ENCODE measurements at regions of chr2 and their contacts with region 1.

Region 1: DNA sequence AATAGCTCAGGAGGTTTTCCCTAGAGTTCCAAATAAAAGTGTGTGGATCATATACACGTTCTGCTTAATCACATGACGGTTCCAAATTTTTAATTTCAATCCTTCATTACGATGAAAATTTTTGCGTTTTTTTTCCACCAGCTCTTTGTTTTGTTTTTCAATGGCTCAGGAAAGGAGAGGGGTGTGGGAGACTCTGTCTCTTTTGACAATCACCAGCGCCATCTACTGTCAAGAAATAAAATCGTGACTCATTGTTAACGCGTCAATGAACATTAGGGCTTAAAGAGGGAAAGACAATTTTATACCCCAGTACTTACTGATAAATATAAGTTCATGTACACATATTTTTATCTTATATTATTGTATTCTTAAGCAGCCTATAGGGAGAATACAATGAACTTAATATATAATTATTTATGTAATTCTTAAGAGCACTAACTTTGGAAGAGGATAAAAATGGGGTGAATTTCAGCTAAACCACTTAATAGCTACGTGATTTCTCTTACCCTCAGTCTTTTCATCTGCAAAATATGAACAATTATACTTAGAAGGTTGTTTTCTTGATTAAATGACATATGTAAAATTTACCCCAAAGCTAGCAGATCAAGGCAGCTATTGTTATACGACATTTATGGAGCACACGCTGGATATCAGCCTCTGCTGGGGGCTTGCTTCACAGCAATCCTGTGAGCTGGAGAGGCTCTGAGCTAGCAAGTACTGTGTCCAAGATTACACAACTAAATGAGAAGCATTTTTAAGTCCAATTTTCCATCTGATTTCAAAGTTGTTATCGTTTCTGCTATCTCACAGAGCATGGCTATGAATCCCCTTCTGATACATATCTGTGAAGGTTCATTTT is 47.4 kb upstream of the RMDN2 start:
- DNase-seq: no peak
- ATAC-seq: peak; percentile 34
- H3K4me3 Mint-ChIP-seq: no peak overlapping the region
- H3K27ac Mint-ChIP-seq: no peak overlapping the region
- H3K4me1 Mint-ChIP-seq: peaks cover 34% of the 10 kb centered on the region
- H3K27me3 Mint-ChIP-seq: peaks cover 8% of the 10 kb centered on the region; the same call in 1 of the 2 replicates
- CTCF ChIP-seq: peak; percentile 64

Region 2: DNA sequence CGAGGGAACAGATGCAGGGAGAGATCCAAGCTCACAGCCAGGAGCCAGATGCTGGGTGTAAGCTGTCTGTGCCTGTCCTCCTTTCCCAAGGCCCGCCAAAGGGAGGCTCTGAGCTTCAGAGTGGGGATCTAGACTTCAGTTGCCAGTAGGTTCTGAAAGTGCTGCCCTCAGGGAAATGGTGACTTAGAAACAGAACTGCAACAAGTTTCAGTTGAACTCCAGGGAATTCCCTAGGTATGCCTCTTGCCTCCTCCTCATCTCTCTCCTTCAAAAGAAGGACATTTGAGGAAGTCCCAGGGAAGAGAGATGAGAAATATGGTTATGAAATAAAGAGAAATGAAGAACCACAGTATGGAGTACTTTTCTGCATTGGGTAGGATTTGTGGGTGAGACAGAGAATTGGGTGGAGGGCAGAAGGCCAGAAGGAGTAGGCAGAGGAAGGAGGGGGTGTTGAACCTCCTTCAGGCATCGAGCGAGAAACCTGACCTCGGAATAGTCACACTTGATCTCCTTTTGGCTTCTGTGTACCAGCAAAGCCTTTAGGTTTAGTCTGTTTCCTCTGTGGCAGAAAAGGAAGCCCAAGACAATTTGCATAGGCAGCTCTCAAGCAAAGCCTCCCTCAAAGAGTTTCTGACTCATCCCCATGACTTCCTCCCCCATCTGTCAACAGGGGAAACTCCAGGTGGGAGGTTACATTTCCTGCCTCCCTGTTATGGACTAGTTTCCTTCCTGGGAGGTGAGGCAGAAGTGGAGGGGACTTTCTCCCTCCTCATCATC is 487.5 kb before region 1 on chr2:
- CTCF ChIA-PET with region 1: interaction called, 78 read pairs
- POLR2A ChIA-PET with region 1: no interaction called
- DNase-seq: no peak
- ATAC-seq: peak; percentile 93
- H3K4me3 Mint-ChIP-seq: no peak overlapping the region
- H3K27ac Mint-ChIP-seq: peak overlapping the region; percentile 85
- H3K4me1 Mint-ChIP-seq: no peaks in the 10 kb centered on the region; the same call in 1 of the 2 replicates
- H3K27me3 Mint-ChIP-seq: no peaks in the 10 kb centered on the region
- CTCF ChIP-seq: no peak

Region 3: GRCh38 chr2:37672104-37672869 is 205.4 kb before region 1 on chr2:
- CTCF ChIA-PET with region 1: interaction called, 13 read pairs
- POLR2A ChIA-PET with region 1: no interaction called
- DNase-seq: peak; percentile 92
- ATAC-seq: peak; percentile 68
- H3K4me3 Mint-ChIP-seq: peak overlapping the region; percentile 82
- H3K27ac Mint-ChIP-seq: peak overlapping the region; percentile 98
- H3K4me1 Mint-ChIP-seq: peaks cover 69% of the 10 kb centered on the region
- H3K27me3 Mint-ChIP-seq: peaks cover 7% of the 10 kb centered on the region
- CTCF ChIP-seq: no peak

Region 4: GRCh38 chr2:37890893-37891495 is 13.3 kb after region 1 on chr2:
- CTCF ChIA-PET with region 1: interaction called, 17 read pairs
- POLR2A ChIA-PET with region 1: no interaction called
- DNase-seq: peak; percentile 81
- ATAC-seq: peak; percentile 96
- H3K4me3 Mint-ChIP-seq: no peak overlapping the region
- H3K27ac Mint-ChIP-seq: no peak overlapping the region
- H3K4me1 Mint-ChIP-seq: peaks cover 3% of the 10 kb centered on the region
- H3K27me3 Mint-ChIP-seq: no peaks in the 10 kb centered on the region
- CTCF ChIP-seq: peak; percentile 68